ENCODE measurements at regions of chr1 and their contacts with region 1.

Region 1: GRCh38 chr1:208652296-208653160 is 408.3 kb upstream of the PLXNA2 start:
- DNase-seq: peak; percentile 89
- ATAC-seq: peak; percentile 90
- H3K4me3 ChIP-seq: no peak overlapping the region
- H3K27ac ChIP-seq: no peak overlapping the region
- H3K4me1 ChIP-seq: peaks cover 19% of the 10 kb centered on the region
- H3K27me3 ChIP-seq: no peaks in the 10 kb centered on the region
- CTCF ChIP-seq: peak; percentile 95

Region 2: GRCh38 chr1:208791456-208791855 is 138.9 kb after region 1 on chr1:
- CTCF ChIA-PET with region 1: no interaction called
- POLR2A ChIA-PET with region 1: no interaction called
- intact Hi-C with region 1: no loop called
- DNase-seq: peak; percentile 24
- ATAC-seq: no peak
- H3K4me3 ChIP-seq: no peak overlapping the region
- H3K27ac ChIP-seq: no peak overlapping the region
- H3K4me1 ChIP-seq: no peaks in the 10 kb centered on the region
- H3K27me3 ChIP-seq: no peaks in the 10 kb centered on the region
- CTCF ChIP-seq: no peak

Region 3: DNA sequence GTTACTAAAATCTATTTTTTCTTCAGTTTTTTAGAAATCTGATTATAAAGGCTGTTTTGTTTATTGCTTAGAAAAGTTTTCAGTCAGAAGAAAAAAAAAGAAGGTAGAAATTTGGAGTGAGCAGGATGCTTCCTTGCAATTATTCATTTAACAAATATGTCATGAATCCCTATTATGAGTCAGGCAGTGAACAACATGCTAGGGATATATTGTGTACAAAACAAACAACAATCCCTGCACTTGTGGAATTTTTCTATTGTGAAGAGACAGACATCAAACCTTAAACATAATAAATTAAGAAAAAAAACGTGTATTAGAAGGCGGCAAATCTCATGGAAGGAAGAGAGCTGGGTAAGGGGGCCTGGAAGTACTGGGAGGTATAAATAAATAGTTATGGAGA is 266.8 kb after region 1 on chr1:
- CTCF ChIA-PET with region 1: no interaction called
- POLR2A ChIA-PET with region 1: no interaction called
- intact Hi-C with region 1: loop called (anchors 5 kb)
- DNase-seq: peak; percentile 94
- ATAC-seq: peak; percentile 63
- H3K4me3 ChIP-seq: no peak overlapping the region
- H3K27ac ChIP-seq: peak overlapping the region; percentile 91
- H3K4me1 ChIP-seq: peaks cover 63% of the 10 kb centered on the region
- H3K27me3 ChIP-seq: no peaks in the 10 kb centered on the region
- CTCF ChIP-seq: no peak

Region 4: GRCh38 chr1:209029737-209030136 is 377.2 kb after region 1 on chr1:
- CTCF ChIA-PET with region 1: no interaction called
- POLR2A ChIA-PET with region 1: no interaction called
- intact Hi-C with region 1: loop called (anchors 1 kb)
- DNase-seq: peak; percentile 54
- ATAC-seq: peak; percentile 73
- H3K4me3 ChIP-seq: no peak overlapping the region
- H3K27ac ChIP-seq: no peak overlapping the region
- H3K4me1 ChIP-seq: no peaks in the 10 kb centered on the region
- H3K27me3 ChIP-seq: no peaks in the 10 kb centered on the region
- CTCF ChIP-seq: peak; percentile 67

Region 5: DNA sequence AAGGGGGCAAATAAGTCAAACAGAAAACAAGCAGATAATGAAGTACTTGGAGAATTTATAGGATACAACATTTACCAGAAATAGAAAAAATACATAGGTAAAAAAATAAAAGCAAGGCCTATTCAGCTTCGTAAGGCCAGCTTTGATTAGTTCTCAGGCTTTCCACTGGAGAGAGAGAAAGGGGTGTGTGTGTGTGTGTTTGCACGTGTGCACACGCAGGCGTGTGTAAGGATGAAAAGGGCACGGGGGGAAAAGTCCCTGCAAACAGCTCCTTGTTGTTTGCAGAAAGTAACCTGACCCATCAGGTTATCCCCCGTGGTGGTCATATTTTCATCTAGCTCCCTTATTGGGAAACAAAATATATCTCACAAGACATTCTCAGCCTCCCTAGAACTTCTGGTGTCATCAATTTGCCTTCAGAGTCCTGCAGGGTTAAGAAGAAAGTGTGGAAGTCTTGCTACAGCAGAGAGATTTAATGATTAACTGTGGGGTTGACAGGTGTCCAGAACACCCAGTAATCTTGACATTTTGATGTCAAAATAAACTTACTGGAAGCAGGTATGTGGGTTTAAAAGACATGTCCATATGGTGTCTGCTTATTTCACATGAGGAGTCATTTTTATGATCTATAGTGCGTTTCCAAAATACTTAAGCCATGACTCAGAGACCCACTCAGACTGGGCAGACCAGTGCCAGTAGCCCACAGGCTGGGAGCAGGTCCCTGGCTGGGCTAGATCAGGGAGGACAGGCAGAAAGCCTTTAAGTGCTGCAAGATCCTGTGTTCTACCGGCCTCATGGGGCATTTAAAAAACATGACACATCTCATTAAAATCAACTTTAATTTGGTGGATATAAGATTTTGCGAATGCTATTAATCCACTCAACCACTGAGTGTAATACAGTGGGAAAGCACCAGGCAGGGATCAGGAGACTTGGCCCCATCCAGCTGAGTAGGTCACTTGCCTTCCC is 443.4 kb after region 1 on chr1:
- CTCF ChIA-PET with region 1: no interaction called
- POLR2A ChIA-PET with region 1: no interaction called
- intact Hi-C with region 1: loop called (anchors 1 kb)
- DNase-seq: peak; percentile 99
- ATAC-seq: peak; percentile 99
- H3K4me3 ChIP-seq: 0 out of 2 replicates have a peak overlapping the region, but pooled peaks have one; percentile 4
- H3K27ac ChIP-seq: peak overlapping the region; percentile 59
- H3K4me1 ChIP-seq: peaks cover 29% of the 10 kb centered on the region
- H3K27me3 ChIP-seq: no peaks in the 10 kb centered on the region
- CTCF ChIP-seq: no peak

Region 6: DNA sequence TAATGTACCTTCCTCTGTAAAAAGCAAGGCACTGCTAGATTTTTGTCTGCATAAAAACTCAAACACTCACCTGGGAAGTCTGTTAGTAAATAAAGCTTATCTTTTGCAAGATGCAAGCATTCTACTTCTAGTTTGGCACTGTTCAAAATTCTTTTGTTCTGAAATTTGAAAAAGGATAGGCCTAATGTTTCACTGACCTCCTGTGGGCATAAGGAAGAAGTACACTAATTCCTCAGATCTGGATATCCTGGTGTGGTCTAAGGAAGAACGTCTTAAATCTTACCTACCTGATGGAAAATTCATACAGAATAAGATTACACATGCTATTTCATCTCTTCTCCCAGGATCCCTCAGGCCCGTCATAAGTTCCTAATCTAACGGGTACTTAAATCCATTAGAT is 837.5 kb after region 1 on chr1:
- CTCF ChIA-PET with region 1: no interaction called
- POLR2A ChIA-PET with region 1: no interaction called
- intact Hi-C with region 1: loop called (anchors 5 kb)
- DNase-seq: peak; percentile 82
- ATAC-seq: peak; percentile 83
- H3K4me3 ChIP-seq: no peak overlapping the region
- H3K27ac ChIP-seq: no peak overlapping the region
- H3K4me1 ChIP-seq: peaks cover 14% of the 10 kb centered on the region; the same call in 1 of the 2 replicates
- H3K27me3 ChIP-seq: no peaks in the 10 kb centered on the region
- CTCF ChIP-seq: peak; percentile 94